ENCODE measurements at regions of chr2 and their contacts with region 1.

Region 1: DNA sequence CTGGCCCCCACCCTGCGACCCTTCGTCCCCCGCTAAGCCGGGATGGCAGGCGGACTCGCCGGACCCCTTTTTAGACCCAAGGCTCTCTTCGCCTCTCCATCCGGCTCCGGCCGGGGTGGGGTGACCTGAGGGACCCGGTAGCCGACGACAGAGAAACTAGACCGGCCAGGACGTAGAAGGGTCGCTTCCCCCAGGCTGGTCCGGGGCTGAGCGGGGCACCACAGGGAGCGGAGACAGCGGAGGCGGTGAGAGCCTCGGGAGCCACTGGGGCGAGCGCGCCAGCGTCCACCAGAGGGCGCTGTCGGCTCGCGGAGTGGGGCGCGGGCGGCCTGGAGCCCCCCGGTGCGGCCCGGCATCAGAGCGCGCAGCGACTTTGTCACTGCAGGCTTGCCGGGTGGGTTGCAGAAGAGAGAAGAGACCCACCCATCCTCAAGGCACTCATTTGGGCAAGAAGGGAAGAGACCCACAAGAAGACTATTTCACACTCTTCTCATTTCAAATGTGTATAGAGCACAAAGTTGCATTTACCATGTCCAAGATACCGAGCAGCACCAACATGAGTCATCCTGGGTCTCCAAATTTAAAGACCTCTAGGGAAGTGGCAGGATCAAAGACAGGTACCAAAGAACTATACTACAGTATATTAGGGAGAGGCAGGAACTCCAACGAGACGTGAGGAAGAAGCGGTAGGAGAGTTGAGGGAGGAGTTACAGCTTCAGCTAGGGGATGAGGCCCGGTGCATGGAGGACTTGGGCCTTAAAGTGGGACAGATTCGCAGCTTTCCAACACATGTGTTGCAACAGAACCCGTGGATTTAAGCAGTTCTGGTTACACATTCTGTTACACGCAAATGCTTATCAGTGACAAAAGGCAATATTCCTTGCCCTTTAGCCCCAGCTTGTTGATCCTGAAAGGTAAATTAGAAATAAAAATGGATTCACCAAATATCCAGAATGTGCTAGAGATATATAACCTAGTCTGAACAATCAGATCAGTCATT is 7.6 kb upstream of the PRKCE start:
- DNase-seq: peak; percentile 60 to 63
- H3K4me3 ChIP-seq: peak overlapping the region; percentile 24 to 89 (median 31)
- H3K27ac ChIP-seq: peak overlapping the region in 1 of 3 donors; percentile 38
- H3K4me1 ChIP-seq: peaks cover 5 to 7% of the 10 kb centered on the region in 2 donors
- H3K27me3 ChIP-seq: no peaks in the 10 kb centered on the region
- CTCF ChIP-seq: peak; percentile 67 to 100 (median 97)
- POLR2A ChIP-seq: no peak

Region 2: GRCh38 chr2:45778720-45779171 is 134.9 kb after region 1 on chr2:
- intact Hi-C with region 1: loop called (anchors 2 kb)
- DNase-seq: peak; percentile 67 to 68
- H3K4me3 ChIP-seq: no peak overlapping the region
- H3K27ac ChIP-seq: no peak overlapping the region
- H3K4me1 ChIP-seq: no peaks in the 10 kb centered on the region
- H3K27me3 ChIP-seq: no peaks in the 10 kb centered on the region
- CTCF ChIP-seq: peak; percentile 58 to 83 (median 74)
- POLR2A ChIP-seq: no peak

Region 3: DNA sequence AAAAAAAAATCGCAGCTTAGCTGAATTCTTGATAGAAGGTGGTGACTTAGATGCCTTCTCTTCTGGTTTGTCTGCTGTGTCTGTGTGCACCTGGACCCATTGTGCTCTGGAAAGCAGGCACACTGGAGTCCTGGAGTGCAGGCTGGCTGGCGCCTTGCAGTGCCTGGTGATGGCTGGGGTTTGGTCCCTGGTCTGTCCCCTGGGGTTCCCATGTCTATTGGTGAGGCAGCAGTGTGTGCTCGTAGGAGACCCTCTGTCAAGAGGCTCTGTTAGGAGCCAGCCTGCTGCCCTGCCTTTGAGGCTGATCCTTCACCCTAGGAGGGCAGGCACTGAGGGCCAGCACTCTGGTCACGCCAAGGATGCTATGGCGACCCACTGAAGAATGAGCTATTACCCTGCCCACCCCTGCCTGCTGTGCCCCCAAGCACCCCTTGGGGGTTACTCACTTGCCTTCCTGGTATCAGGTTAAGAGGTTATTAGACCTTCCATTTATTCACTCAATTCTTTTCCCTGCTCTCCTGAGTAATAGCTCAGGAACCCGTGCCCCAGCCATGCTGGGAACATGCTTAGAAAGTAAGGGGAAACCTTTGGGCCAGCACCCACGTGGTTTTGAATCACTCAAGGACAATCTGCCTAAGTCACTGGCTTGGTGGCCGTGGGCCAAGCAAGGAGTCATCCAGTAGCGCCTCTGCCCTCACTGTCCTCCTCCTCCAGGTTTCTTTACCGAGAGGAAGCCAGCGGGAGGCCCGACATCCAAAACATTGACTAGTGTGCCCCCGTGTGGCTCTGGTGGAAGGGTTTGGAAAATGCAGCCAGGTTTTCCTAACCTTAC is 292.2 kb after region 1 on chr2:
- intact Hi-C with region 1: loop called (anchors 2 kb)
- DNase-seq: peak; percentile 97
- H3K4me3 ChIP-seq: no peak overlapping the region
- H3K27ac ChIP-seq: peak overlapping the region in 1 of 3 donors; percentile 20
- H3K4me1 ChIP-seq: peaks cover 0 to 16% of the 10 kb centered on the region in 2 donors
- H3K27me3 ChIP-seq: no peaks in the 10 kb centered on the region
- CTCF ChIP-seq: peak; percentile 28 to 92 (median 80)
- POLR2A ChIP-seq: no peak